ENCODE measurements at regions of chr17 and their contacts with region 1.

Region 1: DNA sequence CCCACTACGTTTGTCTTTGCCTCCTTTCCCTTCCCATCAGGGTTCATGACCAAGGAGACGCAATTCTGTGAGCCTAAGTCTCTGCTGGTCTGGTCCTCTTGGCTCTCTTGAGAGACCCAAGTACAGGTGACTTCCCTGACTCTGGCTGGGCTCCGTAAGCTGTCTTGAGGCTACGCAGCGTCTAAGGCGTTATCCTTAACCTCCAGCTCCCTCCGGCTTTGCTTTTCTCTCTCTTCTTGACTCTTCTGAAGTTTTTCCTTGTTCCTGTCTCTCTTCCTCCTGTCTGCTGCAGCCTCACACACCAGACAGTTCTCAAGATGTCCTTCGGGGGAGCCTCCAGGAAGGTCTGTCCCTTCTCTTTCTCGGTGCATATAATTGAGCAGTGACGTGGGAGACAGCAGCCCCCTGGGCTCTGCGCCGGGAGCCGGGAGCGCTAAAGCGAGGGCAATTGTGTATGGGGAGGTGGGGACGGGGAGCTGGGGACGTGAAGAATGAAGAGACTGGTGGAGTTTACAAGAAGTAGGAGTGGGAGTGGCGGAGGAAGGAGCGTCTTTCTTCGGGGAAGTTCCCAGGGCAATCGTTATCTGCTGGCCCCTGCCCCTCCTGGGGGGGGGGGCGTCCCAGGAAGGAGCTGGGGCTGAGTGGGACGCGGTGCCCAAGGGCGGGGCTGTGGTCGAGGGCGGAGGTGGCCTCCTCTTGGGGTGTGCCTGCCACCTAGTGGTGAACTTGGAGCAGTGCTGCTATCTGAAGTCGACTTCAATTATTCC is 6.9 kb upstream of the PIRT start:
- DNase-seq: peak; percentile 71

Region 2: GRCh38 chr17:10646392-10646990 is 198.3 kb before region 1 on chr17:
- in situ Hi-C with region 1: loop called (anchors 25 kb)
- DNase-seq: peak; percentile 73